ENCODE measurements at regions of chr20 and their contacts with region 1.

Region 1: GRCh38 chr20:47272893-47273590 is 83.5 kb downstream of the ZMYND8 start:
- DNase-seq: peak; percentile 67 to 77
- ATAC-seq: peak; percentile 63 to 68; a peak in 4 of 6 replicates
- H3K4me3 ChIP-seq: no peak overlapping the region
- H3K27ac ChIP-seq: peak overlapping the region; percentile 84 to 93
- H3K4me1 ChIP-seq: peaks cover 61% of the 10 kb centered on the region
- CTCF ChIP-seq: peak; percentile 95
- EP300 ChIP-seq: no peak
- POLR2A ChIP-seq: no peak
- RAD21 ChIP-seq: peak; percentile 98 to 99

Region 2: GRCh38 chr20:47196091-47197081 is 76.7 kb before region 1 on chr20:
- CTCF ChIA-PET with region 1: interaction called, 78 read pairs
- POLR2A ChIA-PET with region 1: interaction called, 3 read pairs
- DNase-seq: peak; percentile 69 to 86
- ATAC-seq: peak; percentile 71 to 73
- H3K4me3 ChIP-seq: no peak overlapping the region
- H3K27ac ChIP-seq: peak overlapping the region; percentile 75 to 87
- H3K4me1 ChIP-seq: peaks cover 22% of the 10 kb centered on the region
- CTCF ChIP-seq: peak; percentile 98
- EP300 ChIP-seq: no peak
- POLR2A ChIP-seq: no peak
- RAD21 ChIP-seq: peak; percentile 96 to 98

Region 3: GRCh38 chr20:47241345-47241781 is 31.7 kb before region 1 on chr20:
- CTCF ChIA-PET with region 1: interaction called, 13 read pairs
- POLR2A ChIA-PET with region 1: no interaction called
- DNase-seq: no peak
- ATAC-seq: peak in 1 of 2 experiments; percentile 23; a peak in 2 of 6 replicates
- H3K4me3 ChIP-seq: no peak overlapping the region
- H3K27ac ChIP-seq: no peak overlapping the region
- H3K4me1 ChIP-seq: no peaks in the 10 kb centered on the region
- CTCF ChIP-seq: no peak
- EP300 ChIP-seq: no peak
- POLR2A ChIP-seq: no peak
- RAD21 ChIP-seq: no peak

Region 4: GRCh38 chr20:47296950-47297349 is 23.9 kb after region 1 on chr20:
- CTCF ChIA-PET with region 1: interaction called, 11 read pairs
- POLR2A ChIA-PET with region 1: interaction called, 12 read pairs
- DNase-seq: peak in 1 of 2 experiments; percentile 44
- ATAC-seq: peak in 1 of 2 experiments; percentile 65; a peak in 3 of 6 replicates
- H3K4me3 ChIP-seq: no peak overlapping the region
- H3K27ac ChIP-seq: peak overlapping the region; percentile 69 to 81
- H3K4me1 ChIP-seq: peaks cover 29% of the 10 kb centered on the region
- CTCF ChIP-seq: peak; percentile 23; the same call in 1 of the 3 replicates
- EP300 ChIP-seq: no peak
- POLR2A ChIP-seq: no peak
- RAD21 ChIP-seq: peak; percentile 41 to 70; a peak in 3 of 5 replicates

Region 5: GRCh38 chr20:47356526-47357295 is 83.7 kb after region 1 on chr20 and contains the start of gene ZMYND8:
- CTCF ChIA-PET with region 1: interaction called, 137 read pairs
- POLR2A ChIA-PET with region 1: interaction called, 83 read pairs
- DNase-seq: peak; percentile 90 to 94
- ATAC-seq: peak; percentile 8 to 45; a peak in 3 of 6 replicates
- H3K4me3 ChIP-seq: peak within 1 kb of the TSS; percentile 7; the same call in 1 of the 3 replicates
- H3K27ac ChIP-seq: peak within 1 kb of the TSS; percentile 100
- H3K4me1 ChIP-seq: peaks cover 98% of the 10 kb centered on the region
- CTCF ChIP-seq: no peak
- EP300 ChIP-seq: no peak
- POLR2A ChIP-seq: no peak
- RAD21 ChIP-seq: no peak
- polyA plus RNA-seq, gene ZMYND8: 23.6 and 24.9 TPM in 2 replicates

Region 6: GRCh38 chr20:47620808-47621805 is 348.1 kb after region 1 on chr20:
- CTCF ChIA-PET with region 1: interaction called, 24 read pairs
- POLR2A ChIA-PET with region 1: no interaction called
- DNase-seq: peak in 1 of 2 experiments; percentile 71
- ATAC-seq: peak; percentile 37 to 39; a peak in 2 of 6 replicates
- H3K4me3 ChIP-seq: no peak overlapping the region
- H3K27ac ChIP-seq: peak overlapping the region; percentile 58 to 60
- H3K4me1 ChIP-seq: peaks cover 47% of the 10 kb centered on the region
- CTCF ChIP-seq: peak; percentile 93
- EP300 ChIP-seq: no peak
- POLR2A ChIP-seq: no peak
- RAD21 ChIP-seq: peak; percentile 86 to 92

Region 7: DNA sequence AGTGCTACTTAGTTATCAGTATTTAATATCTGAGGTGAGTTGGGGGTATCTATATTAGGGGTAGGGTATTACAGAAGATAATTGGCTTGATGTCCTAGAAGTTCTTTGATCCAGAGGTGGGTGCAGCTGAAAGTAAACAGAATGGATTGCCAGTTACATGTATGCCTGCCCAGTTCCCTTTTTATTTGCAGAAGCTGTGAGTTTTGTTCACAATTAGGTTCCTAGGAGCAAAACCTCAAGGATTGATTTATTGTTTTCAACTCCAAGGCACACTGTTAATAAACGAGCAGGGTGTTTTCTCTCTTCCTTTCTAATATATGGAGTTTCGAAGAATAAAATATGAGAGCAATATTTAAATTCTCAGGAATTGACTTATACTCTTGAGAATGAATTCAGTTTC is 383.3 kb after region 1 on chr20:
- CTCF ChIA-PET with region 1: no interaction called
- POLR2A ChIA-PET with region 1: no interaction called
- DNase-seq: no peak
- ATAC-seq: no peak
- H3K4me3 ChIP-seq: no peak overlapping the region
- H3K27ac ChIP-seq: no peak overlapping the region
- H3K4me1 ChIP-seq: no peaks in the 10 kb centered on the region
- CTCF ChIP-seq: no peak
- EP300 ChIP-seq: no peak
- POLR2A ChIP-seq: no peak
- RAD21 ChIP-seq: no peak